ENCODE measurements at regions of chr19 and their contacts with region 1.

Region 1: DNA sequence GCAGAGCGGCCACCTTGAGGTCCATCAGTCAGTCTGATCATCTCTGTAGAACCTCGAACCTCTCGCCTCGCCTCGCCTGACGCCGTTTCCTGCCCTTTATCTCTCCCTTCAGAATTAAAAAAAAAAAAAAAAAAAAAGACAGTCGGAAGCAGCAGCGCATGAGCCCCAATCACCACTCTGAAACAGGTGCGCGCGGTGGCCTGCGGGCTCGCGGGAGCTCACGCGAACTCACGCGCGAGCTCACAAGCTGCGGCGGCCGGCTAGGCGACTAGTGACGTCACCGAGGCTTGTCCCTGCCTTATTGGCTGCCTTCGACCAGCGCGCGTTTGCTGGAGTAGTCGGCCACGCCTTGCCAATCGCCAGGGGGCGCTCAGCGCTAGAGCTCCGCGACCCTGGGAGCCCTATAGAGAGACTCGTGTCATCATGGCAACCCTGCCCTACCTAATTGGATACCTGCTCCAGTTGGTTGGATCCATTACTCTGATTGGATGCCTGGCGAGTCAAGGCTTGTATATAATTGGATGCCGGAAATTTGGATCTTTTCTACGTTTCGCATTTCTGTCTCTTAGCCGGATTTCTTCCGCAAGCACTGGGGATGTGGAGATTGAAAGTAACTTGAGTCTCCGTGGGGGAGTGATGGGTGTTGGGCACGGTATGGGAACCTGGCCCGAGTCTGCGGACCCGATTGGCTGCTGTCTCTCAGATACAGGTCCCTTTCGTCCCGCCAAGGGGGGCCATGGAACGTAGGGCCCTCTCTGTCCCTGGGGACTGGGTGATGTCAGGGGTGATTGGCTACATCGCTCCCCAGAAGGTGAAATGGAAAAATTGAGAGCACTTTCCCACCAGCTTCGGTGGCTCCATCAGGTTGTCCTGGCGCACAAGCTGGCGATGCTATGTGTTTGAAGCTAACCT is 31.6 kb downstream of the SYT3 start:
- DNase-seq: peak; percentile 77
- H3K4me3 ChIP-seq: no peak overlapping the region
- H3K27ac ChIP-seq: no peak overlapping the region
- H3K4me1 ChIP-seq: no peaks in the 10 kb centered on the region
- H3K27me3 ChIP-seq: no peaks in the 10 kb centered on the region
- CTCF ChIP-seq: peak; percentile 75 to 83
- POLR2A ChIP-seq: no peak

Region 2: GRCh38 chr19:50556282-50557008 is 51.7 kb before region 1 on chr19:
- CTCF ChIA-PET with region 1: interaction called, 10 read pairs
- POLR2A ChIA-PET with region 1: no interaction called
- dilution Hi-C with region 1: no loop called
- intact Hi-C with region 1: no loop called
- DNase-seq: peak; percentile 67
- H3K4me3 ChIP-seq: peak overlapping the region; percentile 35 to 69 (median 43)
- H3K27ac ChIP-seq: no peak overlapping the region
- H3K4me1 ChIP-seq: peaks cover 3% of the 10 kb centered on the region
- H3K27me3 ChIP-seq: peaks cover 3% of the 10 kb centered on the region in 2 experiments
- CTCF ChIP-seq: peak; percentile 93 to 94
- POLR2A ChIP-seq: no peak

Region 3: GRCh38 chr19:50657712-50658440 is 49.7 kb after region 1 on chr19:
- CTCF ChIA-PET with region 1: no interaction called
- POLR2A ChIA-PET with region 1: no interaction called
- dilution Hi-C with region 1: no loop called
- intact Hi-C with region 1: loop called (anchors 2 kb)
- DNase-seq: peak; percentile 98
- H3K4me3 ChIP-seq: peak overlapping the region in 2 of 3 experiments; percentile 2 to 26
- H3K27ac ChIP-seq: peak overlapping the region; percentile 71
- H3K4me1 ChIP-seq: peaks cover 11% of the 10 kb centered on the region
- H3K27me3 ChIP-seq: peaks cover 0 to 2% of the 10 kb centered on the region in 2 experiments
- CTCF ChIP-seq: no peak
- POLR2A ChIP-seq: no peak

Region 4: DNA sequence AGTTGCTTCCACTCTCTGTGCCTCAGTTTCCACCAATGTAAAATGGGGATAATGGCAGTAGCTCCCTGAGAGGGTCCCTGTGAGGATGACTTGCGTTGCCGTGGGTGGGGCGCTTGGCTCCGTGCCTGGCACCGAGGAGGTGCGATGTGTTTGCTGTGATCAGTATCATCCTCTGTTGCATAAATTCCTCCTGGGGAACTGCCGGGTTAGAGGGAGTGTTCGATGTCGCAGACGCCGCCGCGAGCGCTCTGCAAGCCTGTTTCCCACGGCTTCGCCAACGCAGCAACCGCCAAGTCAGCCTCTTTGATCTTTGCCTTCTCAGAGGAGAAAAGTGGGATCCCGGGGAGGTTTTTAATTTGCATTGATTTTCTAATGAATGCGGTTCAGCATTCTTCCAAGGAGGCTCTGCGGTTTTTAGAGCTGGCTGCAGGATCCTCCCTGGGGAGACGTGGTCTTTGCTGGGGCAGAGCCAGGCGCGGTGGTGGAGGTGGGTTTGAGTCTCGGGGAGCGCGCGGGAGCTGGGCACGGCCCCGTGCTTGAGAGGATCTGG is 169.7 kb after region 1 on chr19:
- CTCF ChIA-PET with region 1: interaction called, 15 read pairs
- POLR2A ChIA-PET with region 1: no interaction called
- dilution Hi-C with region 1: no loop called
- intact Hi-C with region 1: loop called (anchors 2 kb)
- DNase-seq: no peak
- H3K4me3 ChIP-seq: no peak overlapping the region
- H3K27ac ChIP-seq: no peak overlapping the region
- H3K4me1 ChIP-seq: no peaks in the 10 kb centered on the region
- H3K27me3 ChIP-seq: peaks cover 26 to 29% of the 10 kb centered on the region in 2 experiments
- CTCF ChIP-seq: no peak
- POLR2A ChIP-seq: no peak

Region 5: DNA sequence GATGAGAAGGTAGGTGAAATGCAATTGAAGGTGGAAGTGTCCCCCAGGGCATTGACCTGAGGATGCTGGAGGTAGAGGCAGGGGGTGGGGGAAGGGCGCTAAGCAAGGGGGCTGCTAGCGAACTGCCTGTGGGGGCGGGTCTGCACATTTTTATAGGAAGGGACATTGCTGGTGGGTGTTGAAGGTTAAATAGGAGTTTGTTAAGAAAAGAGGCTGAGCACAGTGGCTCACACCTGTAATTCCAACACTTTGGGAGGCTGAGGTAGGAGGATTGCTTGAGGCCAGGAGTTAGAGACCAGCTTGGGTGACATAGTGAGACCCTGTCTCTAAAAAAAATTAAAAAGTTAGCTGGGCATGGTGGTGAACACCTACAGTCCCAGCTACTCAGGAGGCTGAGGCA is 176.6 kb after region 1 on chr19:
- CTCF ChIA-PET with region 1: interaction called, 15 read pairs
- POLR2A ChIA-PET with region 1: no interaction called
- dilution Hi-C with region 1: no loop called
- intact Hi-C with region 1: loop called (anchors 2 kb)
- DNase-seq: no peak
- H3K4me3 ChIP-seq: no peak overlapping the region
- H3K27ac ChIP-seq: no peak overlapping the region
- H3K4me1 ChIP-seq: no peaks in the 10 kb centered on the region
- H3K27me3 ChIP-seq: peaks cover 6 to 7% of the 10 kb centered on the region in 2 experiments
- CTCF ChIP-seq: no peak
- POLR2A ChIP-seq: no peak

Measured in endothelial cell of umbilical vein (primary cell).